ENCODE measurements at regions of chr7 and their contacts with region 1.

Region 1: DNA sequence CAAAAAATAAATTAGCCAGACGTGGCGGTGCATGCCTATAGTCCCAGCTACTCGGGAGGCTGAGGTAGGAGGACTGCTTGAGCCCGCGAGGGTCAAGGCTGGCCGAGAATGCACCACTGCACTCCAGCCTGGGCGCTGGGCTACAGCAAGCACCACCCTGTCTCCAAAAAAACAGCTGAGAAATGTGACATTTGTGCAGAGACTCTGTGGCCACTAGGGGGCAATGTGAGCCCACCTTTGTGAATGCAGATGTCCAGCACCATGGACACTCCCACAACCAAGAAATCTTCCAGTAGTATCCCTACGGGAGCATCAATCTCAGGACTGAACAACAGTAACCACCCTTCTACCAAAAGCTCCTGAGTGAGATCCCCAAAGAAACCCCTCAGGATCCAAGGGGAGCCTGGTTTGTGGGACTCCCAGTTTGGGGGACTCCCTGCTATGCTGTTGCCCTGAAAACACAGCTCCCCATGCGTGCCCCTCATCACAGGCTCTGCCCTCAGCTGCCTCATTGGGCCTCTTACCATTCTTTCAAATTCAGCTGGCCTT is 6.2 kb upstream of the AHCYL2 start:
- DNase-seq: peak; percentile 90
- H3K4me3 ChIP-seq: peak overlapping the region in 1 of 2 experiments; percentile 25; a peak in 1 of 4 replicates
- H3K27ac ChIP-seq: no peak overlapping the region
- H3K4me1 ChIP-seq: peaks cover 0 to 8% of the 10 kb centered on the region in 2 experiments; a peak in 1 of 4 replicates
- H3K27me3 ChIP-seq: no peaks in the 10 kb centered on the region
- CTCF ChIP-seq: peak; percentile 99
- EP300 ChIP-seq: no peak
- RAD21 ChIP-seq: peak; percentile 99

Region 2: GRCh38 chr7:128986609-128987008 is 232.0 kb before region 1 on chr7:
- CTCF ChIA-PET with region 1: no interaction called
- POLR2A ChIA-PET with region 1: no interaction called
- DNase-seq: no peak
- H3K4me3 ChIP-seq: no peak overlapping the region
- H3K27ac ChIP-seq: no peak overlapping the region
- H3K4me1 ChIP-seq: peaks cover 0 to 2% of the 10 kb centered on the region in 2 experiments; a peak in 2 of 4 replicates
- H3K27me3 ChIP-seq: no peaks in the 10 kb centered on the region
- CTCF ChIP-seq: no peak
- EP300 ChIP-seq: no peak
- RAD21 ChIP-seq: no peak

Region 3: GRCh38 chr7:129115676-129116075 is 102.9 kb before region 1 on chr7:
- CTCF ChIA-PET with region 1: interaction called, 10 read pairs
- POLR2A ChIA-PET with region 1: no interaction called
- DNase-seq: no peak
- H3K4me3 ChIP-seq: no peak overlapping the region
- H3K27ac ChIP-seq: no peak overlapping the region
- H3K4me1 ChIP-seq: peaks cover 0 to 3% of the 10 kb centered on the region in 2 experiments; a peak in 1 of 4 replicates
- H3K27me3 ChIP-seq: peaks cover 12% of the 10 kb centered on the region; the same call in 1 of the 2 replicates
- CTCF ChIP-seq: no peak
- EP300 ChIP-seq: no peak
- RAD21 ChIP-seq: no peak

Region 4: GRCh38 chr7:129202058-129202777 is 16.4 kb before region 1 on chr7:
- CTCF ChIA-PET with region 1: interaction called, 36 read pairs
- POLR2A ChIA-PET with region 1: no interaction called
- DNase-seq: no peak
- H3K4me3 ChIP-seq: no peak overlapping the region
- H3K27ac ChIP-seq: no peak overlapping the region
- H3K4me1 ChIP-seq: no peaks in the 10 kb centered on the region
- H3K27me3 ChIP-seq: no peaks in the 10 kb centered on the region
- CTCF ChIP-seq: no peak
- EP300 ChIP-seq: no peak
- RAD21 ChIP-seq: no peak

Region 5: GRCh38 chr7:129279762-129280161 is 61.2 kb after region 1 on chr7:
- CTCF ChIA-PET with region 1: interaction called, 105 read pairs
- POLR2A ChIA-PET with region 1: no interaction called
- DNase-seq: no peak
- H3K4me3 ChIP-seq: no peak overlapping the region
- H3K27ac ChIP-seq: no peak overlapping the region
- H3K4me1 ChIP-seq: peaks cover 0 to 6% of the 10 kb centered on the region in 2 experiments; a peak in 1 of 4 replicates
- H3K27me3 ChIP-seq: no peaks in the 10 kb centered on the region
- CTCF ChIP-seq: no peak
- EP300 ChIP-seq: no peak
- RAD21 ChIP-seq: no peak

Region 6: DNA sequence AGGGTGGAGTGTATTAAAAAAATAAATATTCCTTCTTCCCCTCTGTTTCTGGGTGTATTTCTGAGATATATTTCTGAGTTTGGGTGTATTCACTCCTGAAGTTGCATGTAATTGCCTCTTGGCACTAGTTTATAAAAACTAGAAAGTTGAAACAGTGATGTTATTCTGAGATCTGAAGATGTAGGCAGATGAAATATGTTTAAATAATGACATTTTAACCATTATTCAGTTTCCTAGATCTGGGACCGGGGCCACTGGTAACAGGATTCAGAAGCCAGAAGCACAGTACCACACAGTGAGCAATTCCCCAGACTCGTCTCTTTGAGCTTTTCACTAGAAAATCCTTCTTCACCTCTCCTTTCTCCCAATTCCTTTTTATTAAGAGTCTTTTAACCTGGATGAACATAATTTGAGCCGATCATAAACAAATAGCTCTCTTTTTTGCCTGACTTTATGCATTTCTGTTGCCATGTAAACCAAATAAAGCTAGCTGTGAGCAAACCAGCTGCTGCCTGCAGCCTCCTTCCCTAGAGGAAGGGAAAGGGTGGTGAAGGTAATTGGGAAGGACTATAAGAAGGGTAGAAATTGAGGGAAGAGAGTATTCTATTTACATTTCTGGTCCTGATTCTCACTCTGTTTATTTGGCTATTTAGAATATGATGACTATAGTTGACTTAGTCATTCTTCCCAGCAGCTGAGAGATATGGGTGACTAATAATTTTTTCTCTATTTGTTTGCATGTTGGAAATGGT is 113.9 kb after region 1 on chr7:
- CTCF ChIA-PET with region 1: interaction called, 89 read pairs
- POLR2A ChIA-PET with region 1: no interaction called
- DNase-seq: no peak
- H3K4me3 ChIP-seq: no peak overlapping the region
- H3K27ac ChIP-seq: peak overlapping the region in 1 of 2 experiments; percentile 80; a peak in 2 of 4 replicates
- H3K4me1 ChIP-seq: no peaks in the 10 kb centered on the region
- H3K27me3 ChIP-seq: no peaks in the 10 kb centered on the region
- CTCF ChIP-seq: no peak
- EP300 ChIP-seq: no peak
- RAD21 ChIP-seq: no peak

Region 7: GRCh38 chr7:129433847-129434674 is 215.5 kb after region 1 on chr7 and contains the start of gene STRIP2:
- CTCF ChIA-PET with region 1: interaction called, 12 read pairs
- POLR2A ChIA-PET with region 1: no interaction called
- DNase-seq: peak; percentile 97
- H3K4me3 ChIP-seq: peak within 1 kb of the TSS; percentile 85 to 93
- H3K27ac ChIP-seq: peak within 1 kb of the TSS; percentile 39 to 81; a peak in 3 of 4 replicates
- H3K4me1 ChIP-seq: peaks cover 7 to 15% of the 10 kb centered on the region in 2 experiments; a peak in 3 of 4 replicates
- H3K27me3 ChIP-seq: no peaks in the 10 kb centered on the region
- CTCF ChIP-seq: peak; percentile 44
- EP300 ChIP-seq: no peak; a peak in 1 of 4 replicates
- RAD21 ChIP-seq: peak; percentile 11; the same call in 1 of the 2 replicates
- polyA plus RNA-seq, gene STRIP2: 4.9 and 6.9 TPM in 2 replicates

Region 8: GRCh38 chr7:129635300-129636029 is 416.9 kb after region 1 on chr7:
- CTCF ChIA-PET with region 1: interaction called, 29 read pairs
- POLR2A ChIA-PET with region 1: no interaction called
- DNase-seq: peak; percentile 78
- H3K4me3 ChIP-seq: no peak overlapping the region
- H3K27ac ChIP-seq: no peak overlapping the region
- H3K4me1 ChIP-seq: no peaks in the 10 kb centered on the region
- H3K27me3 ChIP-seq: no peaks in the 10 kb centered on the region
- CTCF ChIP-seq: peak; percentile 98
- EP300 ChIP-seq: no peak
- RAD21 ChIP-seq: peak; percentile 90

Measured in SK-N-SH (cell line).